PC-3 (cell line): ENCODE measurements at regions of chr11 and their contacts with region 1.

Region 1: GRCh38 chr11:72328366-72329224 is 84.6 kb upstream of the PHOX2A start:
- DNase-seq: peak; percentile 25
- ATAC-seq: no peak
- H3K4me3 ChIP-seq: no peak overlapping the region
- H3K27ac ChIP-seq: no peak overlapping the region
- H3K4me1 ChIP-seq: no peaks in the 10 kb centered on the region
- H3K27me3 ChIP-seq: no peaks in the 10 kb centered on the region
- CTCF ChIP-seq: peak; percentile 28; the same call in 1 of the 2 replicates

Region 2: GRCh38 chr11:72061739-72062396 is 266.7 kb before region 1 on chr11:
- CTCF ChIA-PET with region 1: no interaction called
- POLR2A ChIA-PET with region 1: no interaction called
- intact Hi-C with region 1: no loop called
- DNase-seq: no peak
- ATAC-seq: no peak
- H3K4me3 ChIP-seq: no peak overlapping the region
- H3K27ac ChIP-seq: no peak overlapping the region
- H3K4me1 ChIP-seq: no peaks in the 10 kb centered on the region
- H3K27me3 ChIP-seq: no peaks in the 10 kb centered on the region
- CTCF ChIP-seq: no peak

Region 3: DNA sequence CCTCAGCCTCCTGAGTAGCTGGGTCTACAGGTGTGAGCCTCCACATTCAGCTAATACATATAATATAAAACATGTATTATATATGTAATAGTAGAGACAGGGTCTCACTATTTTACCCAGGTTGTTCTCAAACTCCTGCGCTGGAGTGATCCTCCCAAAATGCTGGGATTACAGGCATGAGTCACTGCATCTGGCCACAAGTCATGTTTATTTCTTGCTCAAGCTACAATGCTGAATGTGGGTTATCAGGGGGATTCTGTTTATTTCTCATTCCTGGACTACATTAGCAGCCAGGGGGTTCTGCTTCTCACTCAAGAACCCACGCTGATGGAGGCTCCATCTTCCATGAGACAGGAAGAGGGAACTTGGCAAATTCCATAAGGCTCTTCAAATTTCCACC is 168.3 kb before region 1 on chr11:
- CTCF ChIA-PET with region 1: interaction called, 15 read pairs
- POLR2A ChIA-PET with region 1: no interaction called
- intact Hi-C with region 1: no loop called
- DNase-seq: no peak
- ATAC-seq: no peak
- H3K4me3 ChIP-seq: no peak overlapping the region
- H3K27ac ChIP-seq: no peak overlapping the region
- H3K4me1 ChIP-seq: no peaks in the 10 kb centered on the region
- H3K27me3 ChIP-seq: peaks cover 30% of the 10 kb centered on the region; the same call in 1 of the 2 replicates
- CTCF ChIP-seq: no peak

Region 4: DNA sequence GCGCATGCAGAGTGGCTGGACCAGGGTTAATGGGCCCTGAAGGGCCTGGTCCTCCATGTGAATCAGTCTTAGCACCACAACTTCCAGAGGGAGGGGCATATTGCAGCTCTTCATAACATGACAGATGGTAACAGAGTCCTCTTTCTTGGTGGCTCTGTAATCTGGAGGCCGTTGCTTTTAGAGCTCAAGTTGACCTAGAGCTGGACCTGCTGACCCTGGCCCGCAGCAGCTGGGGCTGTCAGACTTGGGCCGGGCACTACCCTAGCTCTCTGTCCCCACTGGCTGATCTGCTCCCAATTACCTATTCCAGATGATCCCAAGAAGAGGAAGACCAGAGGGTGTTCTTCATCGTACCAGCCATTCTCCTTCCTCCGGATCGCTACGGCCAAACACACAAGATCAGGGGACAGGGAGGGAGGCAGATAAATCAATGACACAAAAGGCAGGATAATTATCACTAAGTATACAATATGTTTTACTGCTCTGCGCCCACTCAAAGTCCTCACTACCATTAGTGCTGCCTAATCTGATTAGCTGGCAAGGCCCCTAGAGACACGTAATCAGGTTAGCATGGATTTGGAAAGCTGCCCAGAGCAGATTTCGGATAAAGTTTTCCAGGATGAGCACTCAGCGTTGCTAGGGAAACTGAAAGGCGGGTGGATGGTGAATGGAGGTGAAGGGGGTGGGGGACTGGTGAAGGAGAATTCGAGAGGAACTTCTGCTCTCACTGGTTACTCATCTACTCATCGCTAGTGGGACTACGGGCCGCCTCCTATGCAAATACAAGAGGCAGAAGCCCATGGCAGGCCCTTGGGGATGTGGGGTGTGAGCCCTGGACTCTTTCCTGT is 20.1 kb before region 1 on chr11:
- CTCF ChIA-PET with region 1: no interaction called
- POLR2A ChIA-PET with region 1: no interaction called
- intact Hi-C with region 1: no loop called
- DNase-seq: peak; percentile 35
- ATAC-seq: no peak; the same call in 1 of the 2 replicates
- H3K4me3 ChIP-seq: no peak overlapping the region
- H3K27ac ChIP-seq: no peak overlapping the region
- H3K4me1 ChIP-seq: no peaks in the 10 kb centered on the region
- H3K27me3 ChIP-seq: no peaks in the 10 kb centered on the region
- CTCF ChIP-seq: no peak

Region 5: DNA sequence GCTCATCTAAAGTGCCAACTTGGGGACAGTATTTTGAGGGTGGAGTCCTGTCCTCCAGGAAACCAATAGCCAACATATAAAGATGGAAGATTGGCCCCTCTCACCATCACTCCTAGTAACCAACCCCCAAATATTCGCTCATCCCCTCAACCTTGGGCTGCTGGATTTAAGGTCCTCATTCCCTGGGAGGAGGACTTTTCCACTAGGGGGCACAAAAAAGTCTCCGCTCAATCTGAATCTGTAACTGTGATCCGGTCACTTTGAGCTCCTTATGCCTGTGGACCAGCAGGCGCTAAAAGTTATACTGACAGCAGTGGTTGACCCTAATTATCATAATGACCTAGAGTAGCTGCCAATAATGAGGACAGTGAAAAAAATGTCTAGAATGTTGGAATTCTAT is 126.2 kb after region 1 on chr11:
- CTCF ChIA-PET with region 1: no interaction called
- POLR2A ChIA-PET with region 1: no interaction called
- intact Hi-C with region 1: no loop called
- DNase-seq: no peak
- ATAC-seq: no peak
- H3K4me3 ChIP-seq: no peak overlapping the region
- H3K27ac ChIP-seq: no peak overlapping the region
- H3K4me1 ChIP-seq: no peaks in the 10 kb centered on the region
- H3K27me3 ChIP-seq: peaks cover 39% of the 10 kb centered on the region
- CTCF ChIP-seq: peak; percentile 51